ENCODE measurements at regions of chr1 and their contacts with region 1.

Region 1: DNA sequence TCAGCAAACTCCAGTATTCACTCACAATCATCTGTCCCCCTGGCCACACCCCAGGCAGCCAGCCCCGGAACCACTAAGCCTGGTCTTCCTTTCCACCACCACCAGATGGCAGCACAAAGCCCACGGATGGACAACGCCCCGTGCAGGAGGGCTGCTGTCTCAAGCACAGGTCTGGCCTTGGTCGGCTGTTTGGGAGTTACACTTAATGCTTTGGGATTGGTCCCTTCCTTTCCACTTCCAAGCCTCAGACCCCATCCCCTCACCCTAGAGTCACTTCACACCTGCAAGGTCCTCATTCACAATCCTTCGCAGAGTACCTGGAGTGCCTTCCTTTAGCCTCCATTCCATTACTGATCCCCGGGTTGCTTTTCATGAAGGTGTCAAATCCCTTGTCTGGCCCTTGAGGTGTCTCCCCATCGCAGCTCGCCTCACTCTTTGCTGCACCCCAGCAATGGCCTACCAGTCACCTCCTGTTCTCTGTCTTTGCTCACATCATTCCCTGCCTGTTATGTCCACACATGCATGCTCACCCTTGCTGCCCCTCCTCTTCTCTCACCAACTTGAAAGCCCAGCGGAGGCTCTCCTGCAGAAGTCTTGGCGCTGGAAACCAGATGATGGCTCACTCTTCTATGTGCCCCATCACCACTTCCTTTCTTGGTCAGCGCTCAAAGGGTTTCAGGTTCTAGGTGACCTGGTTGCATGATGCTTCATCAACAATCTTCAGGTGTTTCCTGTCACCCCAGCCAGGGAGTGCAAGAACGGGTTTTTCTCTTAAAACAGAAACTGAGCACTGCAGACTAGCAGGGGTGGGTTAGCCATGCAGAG is 24.9 kb upstream of the KCNA2 start:
- DNase-seq: peak in 9 of 10 donors; percentile 45 to 86 (median 73)
- H3K4me3 ChIP-seq: no peak overlapping the region
- H3K27ac ChIP-seq: no peak overlapping the region
- H3K27me3 ChIP-seq: peaks cover 0 to 8% (median 0%) of the 10 kb centered on the region in 45 donors
- CTCF ChIP-seq: peak; percentile 46 to 95 (median 88)

Region 2: DNA sequence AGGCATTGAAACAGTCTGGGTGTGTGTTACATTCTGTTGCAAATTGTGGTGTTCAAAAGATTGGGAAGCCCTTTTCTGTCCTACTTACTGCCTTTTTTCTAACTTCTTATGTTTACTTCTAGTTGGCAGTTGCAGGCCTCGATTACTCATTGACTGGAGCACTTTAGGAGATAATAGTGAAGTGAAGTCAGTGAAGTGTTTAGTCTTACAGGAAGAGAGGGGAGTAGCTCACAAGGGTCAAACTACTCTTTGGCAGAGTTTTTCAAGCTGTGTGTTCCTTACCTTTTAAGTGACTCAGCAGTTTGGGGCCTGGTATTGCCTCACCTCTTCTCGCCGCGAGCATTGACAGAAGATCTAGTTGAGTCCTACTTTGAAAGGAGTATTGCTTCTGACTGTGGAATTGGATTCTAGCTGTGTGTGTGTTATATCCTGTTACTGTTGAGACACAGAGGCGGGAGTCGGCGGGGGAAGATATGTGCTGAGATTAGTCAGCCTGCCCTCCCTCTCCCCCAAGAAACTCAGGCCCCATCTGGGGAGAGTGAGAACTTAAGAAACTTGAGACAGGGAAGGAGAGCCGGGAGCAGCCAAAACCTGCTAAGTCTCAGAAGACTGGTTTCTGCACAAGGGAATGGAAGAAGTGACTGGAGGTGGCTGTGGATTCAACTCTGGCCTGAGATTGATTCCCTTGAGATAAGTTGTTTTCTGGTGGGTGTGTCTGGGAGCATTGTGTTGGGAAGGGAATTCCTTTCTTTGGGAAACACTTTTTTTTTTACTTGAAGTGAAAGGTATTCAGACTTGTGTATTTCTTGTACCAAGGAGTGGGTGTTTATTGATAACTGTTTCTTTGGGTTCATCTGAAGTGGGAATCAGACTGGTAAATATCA is 627.1 kb before region 1 on chr1:
- intact Hi-C with region 1: no loop called
- DNase-seq: peak in 5 of 10 donors; percentile 40 to 79 (median 65)
- H3K4me3 ChIP-seq: peak overlapping the region in 24 of 59 donors; percentile 0 to 55 (median 20)
- H3K27ac ChIP-seq: peak overlapping the region in 56 of 59 donors; percentile 1 to 99 (median 65)
- H3K27me3 ChIP-seq: no peaks in the 10 kb centered on the region
- CTCF ChIP-seq: no peak

Region 3: GRCh38 chr1:110714374-110714995 is 83.4 kb after region 1 on chr1:
- intact Hi-C with region 1: loop called in 1 of 2 experiments (anchors 5 kb)
- DNase-seq: peak in 5 of 10 donors; percentile 48 to 64 (median 48)
- H3K4me3 ChIP-seq: peak overlapping the region in 4 of 59 donors; percentile 8 to 40 (median 10)
- H3K27ac ChIP-seq: peak overlapping the region in 58 of 59 donors; percentile 2 to 89 (median 70)
- H3K27me3 ChIP-seq: peaks cover 0 to 4% (median 0%) of the 10 kb centered on the region in 45 donors
- CTCF ChIP-seq: no peak

Region 4: GRCh38 chr1:110766025-110766647 is 135.1 kb after region 1 on chr1:
- intact Hi-C with region 1: loop called (anchors 2 to 5 kb)
- DNase-seq: peak in 5 of 10 donors; percentile 34 to 51 (median 38)
- H3K4me3 ChIP-seq: no peak overlapping the region
- H3K27ac ChIP-seq: no peak overlapping the region
- H3K27me3 ChIP-seq: peaks cover 0 to 5% (median 0%) of the 10 kb centered on the region in 45 donors
- CTCF ChIP-seq: peak; percentile 64 to 98 (median 90)